ENCODE measurements at regions of chr12 and their contacts with region 1.

Region 1: GRCh38 chr12:71685914-71686665 is at the start of gene TMEM19:
- DNase-seq: peak; percentile 87 to 89
- ATAC-seq: peak; percentile 95 to 96
- H3K4me3 ChIP-seq: peak within 1 kb of the TSS; percentile 62 to 82 (median 71)
- H3K27ac ChIP-seq: peak within 1 kb of the TSS; percentile 87 to 92 (median 90)
- H3K4me1 ChIP-seq: peaks cover 29 to 45% of the 10 kb centered on the region in 2 donors
- H3K27me3 ChIP-seq: no peaks in the 10 kb centered on the region
- CTCF ChIP-seq: peak in 2 of 5 experiments; percentile 20 to 45
- POLR2A ChIP-seq: peak; percentile 56 to 78
- total RNA-seq, gene TMEM19: 9.3 to 47.0 (median 21.4) TPM

Region 2: GRCh38 chr12:71141378-71141926 is 544.6 kb before region 1 on chr12:
- in situ Hi-C with region 1: no loop called
- intact Hi-C with region 1: loop called (anchors 10 kb)
- DNase-seq: peak; percentile 6 to 27
- ATAC-seq: peak; percentile 87 to 91
- H3K4me3 ChIP-seq: peak overlapping the region in 1 of 4 donors; percentile 23
- H3K27ac ChIP-seq: peak overlapping the region; percentile 74 to 78 (median 75)
- H3K4me1 ChIP-seq: peaks cover 32 to 42% of the 10 kb centered on the region in 2 donors
- H3K27me3 ChIP-seq: no peaks in the 10 kb centered on the region
- CTCF ChIP-seq: no peak
- POLR2A ChIP-seq: peak; percentile 11 to 46

Region 3: DNA sequence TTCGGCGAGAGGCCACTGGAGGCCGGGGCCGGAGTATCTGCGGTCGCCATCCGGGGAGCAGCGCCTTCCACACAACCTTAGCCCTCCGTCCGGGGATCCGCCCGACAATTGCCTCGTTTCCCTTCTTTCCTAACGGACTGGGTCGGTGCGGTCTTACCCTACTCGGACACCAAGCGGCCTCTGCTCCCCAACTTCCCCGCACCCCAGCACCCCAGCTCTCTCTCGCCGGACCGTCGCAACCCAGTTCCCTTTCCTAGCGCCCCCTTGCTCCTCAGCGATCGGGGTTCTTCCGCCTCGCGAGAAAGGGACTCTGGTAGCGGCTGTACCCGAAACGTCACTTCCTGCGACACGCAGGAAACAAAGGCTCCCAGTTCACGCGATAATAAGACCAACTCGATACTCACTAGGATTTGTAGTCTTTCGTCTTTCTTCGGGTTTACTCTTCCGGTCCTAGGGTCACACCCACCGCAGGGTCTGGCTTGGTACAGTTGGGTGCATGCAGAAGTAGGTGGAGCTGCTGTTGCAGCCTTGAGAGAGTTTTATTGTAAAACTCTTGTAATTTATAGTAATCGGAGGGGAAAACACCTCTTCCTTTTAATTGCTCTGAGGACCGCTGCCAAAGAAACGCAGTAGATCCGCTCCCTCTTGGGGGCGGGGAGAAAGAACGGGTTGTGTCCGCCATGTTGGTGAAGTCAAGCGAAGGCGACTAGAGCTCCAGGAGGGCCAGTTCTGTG is 22.4 kb before region 1 on chr12 and contains the start of gene ZFC3H1:
- in situ Hi-C with region 1: no loop called
- intact Hi-C with region 1: loop called (anchors 1 kb)
- DNase-seq: peak; percentile 95 to 96
- ATAC-seq: peak; percentile 97 to 98
- H3K4me3 ChIP-seq: peak within 1 kb of the TSS; percentile 82 to 99 (median 96)
- H3K27ac ChIP-seq: peak within 1 kb of the TSS; percentile 93 to 97 (median 96)
- H3K4me1 ChIP-seq: peaks cover 27 to 31% of the 10 kb centered on the region in 2 donors
- H3K27me3 ChIP-seq: no peaks in the 10 kb centered on the region
- CTCF ChIP-seq: peak in 2 of 5 experiments; percentile 17 to 38
- POLR2A ChIP-seq: peak; percentile 96
- total RNA-seq, gene ZFC3H1: 6.5 to 26.4 (median 9.1) TPM

Region 4: DNA sequence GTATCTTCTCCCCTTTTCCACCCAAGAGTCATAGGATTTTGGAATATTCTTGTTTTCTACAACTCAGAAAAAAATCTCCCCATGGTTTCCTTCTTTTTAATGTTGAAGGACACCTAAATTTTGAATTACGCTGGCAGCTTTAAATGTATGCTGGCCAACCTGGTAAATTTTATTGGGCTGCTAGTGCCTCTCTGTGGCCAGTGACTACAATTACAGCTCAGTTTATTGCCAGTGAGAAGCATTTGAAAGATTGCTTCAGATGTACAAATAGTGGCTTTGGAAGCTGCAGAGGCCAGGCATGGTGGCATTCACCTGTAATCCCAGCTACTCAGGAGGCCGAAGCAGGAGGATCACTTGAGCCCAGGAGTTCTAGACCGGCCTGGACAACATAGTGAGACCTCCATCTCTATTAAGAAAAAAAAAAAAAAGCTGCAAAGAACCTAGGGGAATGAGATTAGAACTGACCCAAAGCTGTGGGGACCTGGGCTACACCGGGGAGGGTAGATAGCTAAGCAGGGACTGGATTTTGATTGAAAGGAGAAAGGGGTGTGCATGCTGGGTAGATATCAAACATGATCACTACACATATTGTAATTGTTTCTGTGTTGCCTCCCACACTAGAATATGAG is 61.0 kb after region 1 on chr12:
- in situ Hi-C with region 1: loop called in 2 of 4 experiments (anchors 5 to 10 kb)
- intact Hi-C with region 1: loop called (anchors 2 kb)
- DNase-seq: peak in 1 of 2 donors; percentile 16
- ATAC-seq: peak; percentile 97 to 98
- H3K4me3 ChIP-seq: no peak overlapping the region
- H3K27ac ChIP-seq: no peak overlapping the region
- H3K4me1 ChIP-seq: peaks cover 0 to 3% of the 10 kb centered on the region in 2 donors
- H3K27me3 ChIP-seq: no peaks in the 10 kb centered on the region
- CTCF ChIP-seq: peak; percentile 43 to 81 (median 70)
- POLR2A ChIP-seq: no peak

Region 5: GRCh38 chr12:71754461-71755145 is 68.5 kb after region 1 on chr12 and contains the start of gene RAB21:
- in situ Hi-C with region 1: loop called in 2 of 4 experiments (anchors 5 to 10 kb)
- intact Hi-C with region 1: loop called (anchors 2 kb)
- DNase-seq: peak; percentile 98
- ATAC-seq: peak; percentile 82 to 85
- H3K4me3 ChIP-seq: peak within 1 kb of the TSS; percentile 78 to 89 (median 84)
- H3K27ac ChIP-seq: peak within 1 kb of the TSS; percentile 93 to 97 (median 96)
- H3K4me1 ChIP-seq: peaks cover 20 to 21% of the 10 kb centered on the region in 2 donors
- H3K27me3 ChIP-seq: no peaks in the 10 kb centered on the region
- CTCF ChIP-seq: peak; percentile 31 to 52 (median 42)
- POLR2A ChIP-seq: peak; percentile 94 to 95
- total RNA-seq, gene RAB21: 17.4 to 75.9 (median 45.7) TPM

Region 6: GRCh38 chr12:71787580-71787979 is 101.5 kb after region 1 on chr12:
- in situ Hi-C with region 1: no loop called
- intact Hi-C with region 1: no loop called
- DNase-seq: no peak
- ATAC-seq: no peak
- H3K4me3 ChIP-seq: no peak overlapping the region
- H3K27ac ChIP-seq: no peak overlapping the region
- H3K4me1 ChIP-seq: no peaks in the 10 kb centered on the region
- H3K27me3 ChIP-seq: no peaks in the 10 kb centered on the region
- CTCF ChIP-seq: no peak
- POLR2A ChIP-seq: no peak

Region 7: GRCh38 chr12:71846322-71846940 is 160.3 kb after region 1 on chr12:
- in situ Hi-C with region 1: no loop called
- intact Hi-C with region 1: loop called (anchors 5 kb)
- DNase-seq: no peak
- ATAC-seq: no peak
- H3K4me3 ChIP-seq: peak overlapping the region in 1 of 4 donors; percentile 5
- H3K27ac ChIP-seq: peak overlapping the region; percentile 84 to 95 (median 90)
- H3K4me1 ChIP-seq: peaks cover 86 to 94% of the 10 kb centered on the region in 2 donors
- H3K27me3 ChIP-seq: no peaks in the 10 kb centered on the region
- CTCF ChIP-seq: peak; percentile 11 to 78 (median 53)
- POLR2A ChIP-seq: no peak